ENCODE measurements at regions of chr16 and their contacts with region 1.

Region 1: GRCh38 chr16:57802341-57803133 is at the start of gene KIFC3:
- DNase-seq: peak; percentile 52
- H3K4me3 ChIP-seq: peak within 1 kb of the TSS; percentile 43 to 47
- H3K27ac ChIP-seq: peak within 1 kb of the TSS; percentile 75 to 77
- H3K4me1 ChIP-seq: no peaks in the 10 kb centered on the region
- H3K27me3 ChIP-seq: no peaks in the 10 kb centered on the region
- CTCF ChIP-seq: peak in 2 of 4 experiments; percentile 27 to 55
- POLR2A ChIP-seq: no peak
- total RNA-seq, gene KIFC3: 16.3 to 79.5 TPM

Region 2: DNA sequence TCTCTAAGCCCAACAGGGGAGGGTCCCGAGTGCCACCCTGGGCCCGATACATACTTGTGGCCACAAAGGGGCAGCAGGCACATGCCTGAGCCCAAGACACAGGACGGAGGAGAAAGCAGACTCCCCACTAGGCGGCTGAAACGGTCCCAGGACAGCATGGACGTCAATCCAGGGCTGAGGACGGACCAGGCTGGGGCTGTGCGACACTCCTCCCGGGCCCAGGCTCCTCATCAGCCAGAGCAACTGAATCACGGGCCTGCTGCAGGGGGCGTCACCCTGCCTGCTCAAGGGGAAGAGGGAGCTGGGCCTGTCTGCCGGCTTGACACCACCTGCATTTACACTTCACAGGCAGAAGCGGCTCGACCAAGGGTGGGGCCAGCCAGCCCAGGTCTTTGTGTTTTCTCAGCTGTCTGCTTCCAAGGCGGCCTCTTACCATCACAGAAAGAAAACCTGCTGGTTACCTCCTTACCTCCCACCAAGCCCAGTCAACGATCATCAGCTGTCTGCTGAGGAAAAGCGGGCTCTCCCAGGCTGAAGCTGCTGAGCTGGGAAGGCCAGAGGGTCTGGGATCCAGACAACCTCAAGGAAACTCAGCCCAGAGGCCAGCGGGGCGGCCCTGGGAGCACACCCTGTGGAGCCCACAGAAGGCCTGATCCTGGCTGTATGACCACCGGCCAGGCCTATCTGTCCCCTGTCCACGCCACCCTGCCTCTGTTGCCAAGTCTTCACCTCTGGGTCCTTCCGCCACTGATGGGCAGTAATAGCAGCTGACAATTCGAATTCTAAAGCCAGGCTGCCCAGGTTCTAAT is 26.7 kb before region 1 on chr16:
- intact Hi-C with region 1: no loop called
- DNase-seq: no peak
- H3K4me3 ChIP-seq: no peak overlapping the region
- H3K27ac ChIP-seq: no peak overlapping the region
- H3K4me1 ChIP-seq: no peaks in the 10 kb centered on the region
- H3K27me3 ChIP-seq: no peaks in the 10 kb centered on the region
- CTCF ChIP-seq: peak in 1 of 4 experiments; percentile 30
- POLR2A ChIP-seq: no peak

Region 3: DNA sequence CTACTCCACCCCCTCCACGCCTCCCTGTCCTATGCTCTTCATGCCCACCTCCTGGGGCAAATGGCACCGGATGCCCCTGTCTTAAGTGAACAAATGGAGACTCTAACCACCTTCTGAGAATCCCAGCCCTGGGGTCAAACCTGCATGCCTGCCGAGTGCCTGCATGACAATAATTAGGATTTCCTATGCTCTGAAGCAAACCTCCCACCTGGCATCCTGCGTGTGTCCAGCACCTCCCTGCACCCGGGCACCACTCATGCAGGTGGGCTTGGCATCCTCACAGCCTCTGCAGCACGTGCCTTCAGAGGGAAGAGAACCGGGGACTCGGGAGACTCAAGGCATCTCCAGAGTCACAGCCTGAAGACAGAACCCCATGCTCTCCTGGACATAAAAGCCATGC is 10.9 kb after region 1 on chr16:
- intact Hi-C with region 1: loop called (anchors 2 kb)
- DNase-seq: no peak
- H3K4me3 ChIP-seq: no peak overlapping the region
- H3K27ac ChIP-seq: no peak overlapping the region
- H3K4me1 ChIP-seq: no peaks in the 10 kb centered on the region
- H3K27me3 ChIP-seq: no peaks in the 10 kb centered on the region
- CTCF ChIP-seq: no peak
- POLR2A ChIP-seq: no peak

Region 4: GRCh38 chr16:57863434-57864160 is 61.1 kb after region 1 on chr16:
- intact Hi-C with region 1: loop called (anchors 5 kb)
- DNase-seq: peak; percentile 63
- H3K4me3 ChIP-seq: no peak overlapping the region
- H3K27ac ChIP-seq: no peak overlapping the region
- H3K4me1 ChIP-seq: no peaks in the 10 kb centered on the region
- H3K27me3 ChIP-seq: no peaks in the 10 kb centered on the region
- CTCF ChIP-seq: peak in 3 of 4 experiments; percentile 33 to 66 (median 61)
- POLR2A ChIP-seq: no peak